K562 (cell line): ENCODE measurements at regions of chr4 and their contacts with region 1.

Region 1: GRCh38 chr4:163191999-163192398 is 25.3 kb upstream of the NAF1 start:
- DNase-seq: peak; percentile 35 to 71 (median 43)
- ATAC-seq: peak; percentile 70
- H3K4me3 ChIP-seq: no peak overlapping the region
- H3K27ac ChIP-seq: no peak overlapping the region
- H3K4me1 ChIP-seq: peaks cover 4 to 27% of the 10 kb centered on the region in 2 experiments; a peak in 4 of 5 replicates
- H3K27me3 ChIP-seq: no peaks in the 10 kb centered on the region
- CTCF ChIP-seq: peak; percentile 71 to 85 (median 78)
- EP300 ChIP-seq: no peak
- POLR2A ChIP-seq: no peak
- RAD21 ChIP-seq: peak; percentile 76

Region 2: DNA sequence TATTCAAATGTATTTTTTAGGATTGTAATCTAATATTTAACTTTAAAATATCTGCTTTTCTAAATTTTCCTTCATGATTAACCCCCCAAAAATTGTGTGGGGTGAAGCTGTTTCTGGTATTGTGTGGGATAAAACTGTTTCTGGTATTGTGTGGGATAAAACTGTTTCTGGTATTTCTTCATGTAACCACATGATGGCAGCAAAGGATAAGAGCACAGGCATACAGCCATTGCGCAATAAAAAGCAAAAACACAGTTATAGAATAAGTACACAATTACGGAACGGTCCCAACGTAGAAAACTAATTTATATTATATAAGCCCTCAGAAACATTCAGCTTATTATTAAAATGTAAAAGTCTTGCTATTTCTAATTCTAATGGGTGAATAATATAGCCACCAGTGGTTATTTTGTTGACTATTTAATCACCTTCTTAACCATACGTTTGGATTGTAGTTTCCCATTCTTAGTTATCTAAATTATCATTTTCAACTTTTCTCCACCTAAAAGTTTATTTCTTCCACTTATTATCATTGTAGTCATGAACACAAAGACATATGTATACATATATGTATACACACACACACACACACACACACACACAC is 694.3 kb before region 1 on chr4:
- CTCF ChIA-PET with region 1: no interaction called
- POLR2A ChIA-PET with region 1: no interaction called
- in situ Hi-C with region 1: no loop called
- intact Hi-C with region 1: loop called (anchors 5 kb)
- DNase-seq: peak; percentile 1 to 5 (median 4)
- ATAC-seq: no peak
- H3K4me3 ChIP-seq: no peak overlapping the region
- H3K27ac ChIP-seq: no peak overlapping the region
- H3K4me1 ChIP-seq: no peaks in the 10 kb centered on the region
- H3K27me3 ChIP-seq: no peaks in the 10 kb centered on the region
- CTCF ChIP-seq: peak; percentile 25 to 47 (median 38); a peak in 3 of 6 replicates
- EP300 ChIP-seq: no peak
- POLR2A ChIP-seq: no peak
- RAD21 ChIP-seq: peak; percentile 42 to 56; a peak in 3 of 4 replicates

Region 3: GRCh38 chr4:163107754-163108153 is 84.2 kb before region 1 on chr4:
- CTCF ChIA-PET with region 1: no interaction called
- POLR2A ChIA-PET with region 1: interaction called, 4 read pairs
- in situ Hi-C with region 1: no loop called
- intact Hi-C with region 1: loop called (anchors 2 kb)
- DNase-seq: peak in 1 of 4 experiments; percentile 20
- ATAC-seq: no peak
- H3K4me3 ChIP-seq: no peak overlapping the region
- H3K27ac ChIP-seq: no peak overlapping the region
- H3K4me1 ChIP-seq: no peaks in the 10 kb centered on the region
- H3K27me3 ChIP-seq: no peaks in the 10 kb centered on the region
- CTCF ChIP-seq: peak in 1 of 3 experiments; percentile 43; a peak in 2 of 6 replicates
- EP300 ChIP-seq: no peak
- POLR2A ChIP-seq: no peak
- RAD21 ChIP-seq: peak; percentile 16 to 26; a peak in 1 of 4 replicates

Region 4: DNA sequence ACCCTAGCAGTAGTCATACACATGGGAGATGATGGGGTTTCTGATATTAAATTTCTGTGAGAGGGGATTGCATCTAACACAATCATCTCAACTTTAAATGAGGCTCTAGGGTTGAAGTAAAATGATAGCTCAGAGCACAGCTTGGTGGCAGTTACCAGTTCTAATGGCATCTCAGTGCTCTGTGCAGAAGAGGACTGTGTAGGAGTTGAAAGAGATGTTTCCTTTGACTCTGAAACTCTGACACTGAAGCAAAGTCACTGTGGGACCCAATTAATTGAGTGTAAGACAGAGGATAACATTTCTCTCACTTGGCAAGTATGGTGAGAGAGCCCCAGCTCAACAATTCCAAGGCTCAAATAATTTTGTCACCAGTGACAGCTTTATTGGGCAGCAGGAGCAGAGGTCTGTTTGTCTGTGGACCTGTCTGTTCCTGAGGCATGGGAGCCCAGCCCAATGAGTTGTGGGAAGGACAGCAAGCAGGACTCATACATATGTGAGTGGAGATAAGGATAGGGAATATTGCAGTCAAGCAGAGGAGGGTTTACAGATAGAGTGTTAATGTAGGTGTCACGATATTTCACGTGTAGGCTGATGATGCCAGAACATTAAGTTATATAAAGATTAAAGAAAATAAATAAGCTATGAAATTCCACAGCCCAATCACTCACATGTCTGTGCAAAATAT is 51.4 kb after region 1 on chr4:
- CTCF ChIA-PET with region 1: no interaction called
- POLR2A ChIA-PET with region 1: no interaction called
- in situ Hi-C with region 1: no loop called
- intact Hi-C with region 1: loop called (anchors 1 kb)
- DNase-seq: peak; percentile 47 to 79 (median 66)
- ATAC-seq: peak; percentile 97
- H3K4me3 ChIP-seq: no peak overlapping the region
- H3K27ac ChIP-seq: no peak overlapping the region
- H3K4me1 ChIP-seq: peaks cover 0 to 19% of the 10 kb centered on the region in 2 experiments; a peak in 3 of 5 replicates
- H3K27me3 ChIP-seq: no peaks in the 10 kb centered on the region
- CTCF ChIP-seq: no peak
- EP300 ChIP-seq: no peak
- POLR2A ChIP-seq: no peak
- RAD21 ChIP-seq: no peak

Region 5: DNA sequence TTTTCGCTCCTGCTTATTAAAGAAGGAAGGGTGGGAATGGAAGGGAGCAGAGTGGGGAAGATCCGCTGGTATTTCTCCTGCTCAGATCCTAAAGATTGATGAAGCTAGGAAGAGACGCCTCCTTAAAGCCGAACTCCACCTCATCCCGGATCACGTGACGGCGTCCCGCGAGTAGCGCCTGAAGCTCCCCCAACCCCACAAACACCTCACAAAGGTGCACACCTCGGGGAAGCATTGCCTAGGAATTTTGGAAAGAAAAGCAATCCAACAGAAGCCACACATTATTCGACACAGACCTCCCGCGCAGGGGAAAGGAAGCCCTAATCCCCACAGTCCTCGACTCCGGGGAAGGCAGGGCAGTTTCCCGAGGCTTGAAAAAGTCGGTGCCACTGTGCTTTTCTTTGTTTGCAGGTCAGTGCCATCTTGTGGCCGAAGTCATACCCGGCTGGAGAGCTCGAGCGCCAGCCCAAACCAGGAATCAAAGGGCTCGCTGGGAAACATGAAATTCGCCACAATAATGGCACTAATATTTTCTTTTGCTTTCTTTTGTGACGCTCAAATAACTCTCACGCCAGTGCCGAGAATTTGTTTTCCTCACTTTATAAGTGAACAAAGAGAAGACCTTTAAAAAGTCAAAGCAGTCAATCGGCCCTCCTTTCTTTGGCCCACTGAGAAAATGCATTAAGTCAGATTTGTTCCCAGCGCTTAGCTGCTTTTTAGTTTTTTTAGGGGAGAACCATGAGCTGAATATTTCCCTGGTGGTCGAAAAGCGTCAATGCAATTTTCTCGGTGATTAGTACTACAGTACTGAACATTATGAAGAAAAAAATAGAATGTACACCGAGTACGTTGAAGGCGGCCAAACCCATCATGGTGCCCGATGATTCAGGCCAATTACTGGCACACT is 140.8 kb after region 1 on chr4 and contains the start of gene NPY1R:
- CTCF ChIA-PET with region 1: no interaction called
- POLR2A ChIA-PET with region 1: no interaction called
- in situ Hi-C with region 1: loop called (anchors 10 kb)
- intact Hi-C with region 1: loop called (anchors 1 kb)
- DNase-seq: peak; percentile 46 to 76 (median 60)
- ATAC-seq: peak; percentile 98
- H3K4me3 ChIP-seq: peak within 1 kb of the TSS; percentile 16
- H3K27ac ChIP-seq: no peak within 1 kb of the TSS
- H3K4me1 ChIP-seq: peaks cover 0 to 8% of the 10 kb centered on the region in 2 experiments; a peak in 4 of 5 replicates
- H3K27me3 ChIP-seq: peaks cover 0 to 15% of the 10 kb centered on the region in 2 experiments; a peak in 1 of 5 replicates
- CTCF ChIP-seq: peak; percentile 67 to 80 (median 71)
- EP300 ChIP-seq: no peak
- POLR2A ChIP-seq: no peak
- RAD21 ChIP-seq: peak; percentile 61 to 76
- polyA plus RNA-seq, gene NPY1R: 0.04 to 0.10 TPM

Region 6: DNA sequence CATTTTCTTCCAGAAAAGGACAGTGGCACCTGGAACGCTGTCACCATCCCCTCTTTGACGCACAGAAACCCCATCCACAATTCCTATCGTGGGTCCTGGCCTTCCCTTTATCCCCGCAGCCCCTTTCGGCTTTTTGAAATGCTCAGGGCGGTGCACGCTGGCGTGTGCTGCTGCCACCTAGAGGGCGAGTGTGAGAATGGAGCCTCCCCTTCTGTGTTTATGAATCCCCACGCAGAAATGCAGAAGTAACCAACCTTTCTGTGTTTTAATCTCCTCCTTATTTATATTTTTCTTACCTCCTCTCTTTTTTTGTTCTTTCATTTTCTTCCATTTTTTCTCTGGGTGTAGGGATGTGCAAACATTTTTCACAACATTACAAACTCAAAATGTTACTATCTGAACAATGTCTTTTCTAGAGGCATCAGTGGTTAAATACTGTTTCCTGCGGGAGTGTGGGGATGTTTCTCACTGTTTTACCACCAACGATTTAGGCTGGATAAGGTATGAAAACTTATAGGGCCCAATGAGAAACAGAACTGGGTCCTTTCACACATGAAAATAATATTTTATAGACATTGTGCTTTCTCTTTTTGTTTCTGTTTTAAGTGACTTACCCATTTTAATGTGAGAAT is 352.5 kb after region 1 on chr4:
- CTCF ChIA-PET with region 1: no interaction called
- POLR2A ChIA-PET with region 1: no interaction called
- in situ Hi-C with region 1: no loop called
- intact Hi-C with region 1: loop called (anchors 10 kb)
- DNase-seq: peak; percentile 70 to 79 (median 74)
- ATAC-seq: peak; percentile 95
- H3K4me3 ChIP-seq: no peak overlapping the region
- H3K27ac ChIP-seq: no peak overlapping the region
- H3K4me1 ChIP-seq: no peaks in the 10 kb centered on the region
- H3K27me3 ChIP-seq: no peaks in the 10 kb centered on the region
- CTCF ChIP-seq: peak; percentile 80 to 95 (median 85)
- EP300 ChIP-seq: no peak
- POLR2A ChIP-seq: no peak
- RAD21 ChIP-seq: peak; percentile 54 to 63